Activated T-helper 1 cell treated with anti-CD3 and anti-CD28 coated beads, Interleukin-12 subunit alpha, Interleukin-12 subunit beta, Interleukin-2, Interleukin-4 antibody, amounts not matched to agents 30 ng/mL and 10 ng/mL and 1 ng/mL, durations not matched to agents 14 hours and 24 hours and 36 hours (primary cell): ENCODE measurements at regions of chr3 and their contacts with region 1.

Region 1: GRCh38 chr3:74021449-74021848 is 396.7 kb upstream of the PDZRN3 start:
- DNase-seq: no peak
- H3K4me3 Mint-ChIP-seq: no peak overlapping the region
- H3K27ac Mint-ChIP-seq: no peak overlapping the region
- H3K4me1 Mint-ChIP-seq: no peaks in the 10 kb centered on the region
- H3K27me3 Mint-ChIP-seq: no peaks in the 10 kb centered on the region

Region 2: DNA sequence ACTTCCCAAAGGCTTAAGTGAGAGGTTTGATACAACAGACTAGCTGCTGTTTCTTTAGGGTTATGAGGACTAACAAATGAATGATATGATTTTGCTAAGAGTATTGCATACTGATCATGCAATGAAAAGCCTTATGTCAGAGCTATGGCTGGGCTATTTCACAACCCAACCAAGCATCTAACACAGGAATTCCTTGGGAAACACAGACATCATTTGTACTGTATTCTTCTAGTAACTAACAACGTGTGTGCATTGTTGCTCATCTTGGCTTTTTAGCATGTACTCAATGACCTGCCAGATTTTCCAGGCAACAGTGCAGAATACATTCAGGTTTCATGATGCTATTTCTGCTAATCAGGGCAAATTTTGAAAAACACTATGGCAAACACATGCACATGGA is 416.0 kb before region 1 on chr3:
- intact Hi-C with region 1: loop called (anchors 5 kb)
- DNase-seq: no peak
- H3K4me3 Mint-ChIP-seq: no peak overlapping the region
- H3K27ac Mint-ChIP-seq: no peak overlapping the region
- H3K4me1 Mint-ChIP-seq: no peaks in the 10 kb centered on the region
- H3K27me3 Mint-ChIP-seq: peaks cover 2% of the 10 kb centered on the region

Region 3: DNA sequence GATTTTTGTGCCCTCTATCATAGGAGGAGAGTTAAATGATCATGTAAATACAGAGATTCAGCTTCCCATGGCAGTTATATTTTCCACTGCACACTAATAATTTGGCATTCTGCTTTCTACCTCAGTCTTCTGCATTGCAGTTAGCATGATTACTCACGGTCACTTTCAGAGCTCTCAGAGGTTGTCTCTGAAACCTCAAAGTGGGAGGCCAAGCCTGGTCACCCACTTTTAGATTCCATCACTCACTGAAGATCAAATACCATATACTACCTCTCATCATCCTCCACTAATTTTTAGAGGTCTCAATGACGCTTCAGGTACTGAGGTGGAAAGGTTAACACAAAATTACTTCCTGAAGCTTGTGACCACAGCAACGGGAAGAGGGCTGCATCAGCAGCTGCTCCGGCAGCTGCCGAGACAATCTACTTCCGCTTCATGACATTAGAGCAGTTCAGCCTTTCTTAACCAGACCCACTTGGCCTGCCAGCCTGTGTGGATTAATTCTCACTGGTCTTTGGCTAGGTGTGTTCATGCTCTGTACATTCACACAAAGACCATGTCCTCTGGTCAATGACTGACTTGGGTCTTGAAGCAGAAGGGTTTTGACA is 19.7 kb after region 1 on chr3:
- intact Hi-C with region 1: no loop called
- DNase-seq: no peak
- H3K4me3 Mint-ChIP-seq: no peak overlapping the region
- H3K27ac Mint-ChIP-seq: no peak overlapping the region
- H3K4me1 Mint-ChIP-seq: no peaks in the 10 kb centered on the region
- H3K27me3 Mint-ChIP-seq: peaks cover 2% of the 10 kb centered on the region